Right ventricle myocardium inferior (tissue), 1 donor: ENCODE measurements at regions of chr12 and their contacts with region 1.

Region 1: GRCh38 chr12:45775964-45776363 is 46.5 kb downstream of the ARID2 start:
- DNase-seq: no peak
- ATAC-seq: no peak

Region 2: DNA sequence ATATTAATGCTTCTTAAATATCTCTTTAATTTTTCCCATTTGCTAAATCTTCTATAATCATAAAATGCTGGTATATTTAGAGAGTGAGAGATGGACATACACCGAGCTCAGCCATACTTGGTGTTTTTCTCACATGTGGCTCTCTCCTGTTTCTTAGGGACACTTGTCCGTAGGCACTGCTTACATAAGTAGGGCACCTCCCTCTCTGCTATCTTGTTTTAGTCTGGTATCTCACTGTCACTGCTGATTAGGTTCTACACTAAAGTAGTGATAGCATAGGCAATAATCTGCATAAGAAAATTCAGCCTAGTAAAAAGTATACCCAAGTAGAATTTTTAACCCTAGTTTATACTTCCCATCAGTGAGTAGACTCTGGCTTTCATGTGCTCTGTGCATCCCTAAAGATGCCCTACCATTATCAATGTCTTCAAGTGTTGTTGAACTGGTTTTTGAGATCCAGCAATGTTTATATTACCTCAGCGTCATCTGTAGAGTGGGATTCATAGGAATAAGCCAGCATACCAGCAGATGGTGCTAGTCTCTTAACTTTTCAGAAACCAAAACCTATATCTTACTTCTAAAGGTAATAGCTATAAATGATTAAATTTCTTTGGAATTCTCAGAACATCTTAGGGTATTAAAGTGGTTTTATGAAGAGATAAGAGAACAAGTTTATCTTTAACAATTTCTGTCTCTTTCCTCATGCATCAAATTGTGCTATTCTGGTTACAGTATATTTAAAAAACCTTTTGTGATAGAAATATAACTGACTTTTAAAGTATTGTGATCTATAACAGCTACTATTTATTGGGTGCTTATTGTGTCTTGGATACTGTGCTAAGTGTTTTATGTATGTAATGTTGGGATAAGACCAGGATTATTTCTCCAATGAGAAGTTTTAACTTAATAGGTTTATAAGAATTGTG is 13.5 kb before region 1 on chr12:
- intact Hi-C with region 1: loop called (anchors 1 kb)
- DNase-seq: no peak
- ATAC-seq: no peak

Region 3: GRCh38 chr12:45816652-45817051 is 40.7 kb after region 1 on chr12:
- intact Hi-C with region 1: no loop called
- DNase-seq: no peak
- ATAC-seq: no peak